Naive thymus-derived CD4-positive, alpha-beta T cell (primary cell): ENCODE measurements at regions of chr11 and their contacts with region 1.

Region 1: GRCh38 chr11:88337181-88337986 is at the start of gene CTSC:
- DNase-seq: peak; percentile 79 to 93 (median 86)
- ATAC-seq: peak; percentile 94
- H3K4me3 ChIP-seq: peak within 1 kb of the TSS; percentile 97
- H3K4me3 Mint-ChIP-seq: peak within 1 kb of the TSS; percentile 88 to 100 (median 99)
- H3K27ac ChIP-seq: peak within 1 kb of the TSS; percentile 70
- H3K27ac Mint-ChIP-seq: peak within 1 kb of the TSS; percentile 88 to 99 (median 96)
- H3K4me1 ChIP-seq: peaks cover 0 to 36% of the 10 kb centered on the region in 2 donors
- H3K4me1 Mint-ChIP-seq: peaks cover 30 to 76% (median 63%) of the 10 kb centered on the region in 7 donors
- H3K27me3 ChIP-seq: no peaks in the 10 kb centered on the region
- H3K27me3 Mint-ChIP-seq: no peaks in the 10 kb centered on the region
- total RNA-seq, gene CTSC: 26.9 to 174 (median 45.2) TPM

Region 2: GRCh38 chr11:87037450-87038234 is 1299.7 kb before region 1 on chr11 and contains the start of gene TMEM135:
- CTCF ChIA-PET with region 1: no interaction called
- POLR2A ChIA-PET with region 1: no interaction called
- intact Hi-C with region 1: loop called in 1 of 2 experiments (anchors 5 kb)
- DNase-seq: peak; percentile 82 to 96 (median 90)
- ATAC-seq: peak; percentile 99
- H3K4me3 ChIP-seq: peak within 1 kb of the TSS; percentile 97
- H3K4me3 Mint-ChIP-seq: peak within 1 kb of the TSS; percentile 92 to 99 (median 97)
- H3K27ac ChIP-seq: peak within 1 kb of the TSS; percentile 69
- H3K27ac Mint-ChIP-seq: peak within 1 kb of the TSS; percentile 77 to 96 (median 93)
- H3K4me1 ChIP-seq: peaks cover 11 to 15% of the 10 kb centered on the region in 2 donors
- H3K4me1 Mint-ChIP-seq: peaks cover 37 to 68% (median 58%) of the 10 kb centered on the region in 7 donors
- H3K27me3 ChIP-seq: no peaks in the 10 kb centered on the region
- H3K27me3 Mint-ChIP-seq: peaks cover 0 to 19% (median 0%) of the 10 kb centered on the region in 5 donors
- total RNA-seq, gene TMEM135: 8.3 to 26.8 (median 12.8) TPM

Region 3: GRCh38 chr11:88301488-88302140 is 35.8 kb before region 1 on chr11:
- CTCF ChIA-PET with region 1: no interaction called
- POLR2A ChIA-PET with region 1: no interaction called
- intact Hi-C with region 1: loop called in 1 of 2 experiments (anchors 2 kb)
- DNase-seq: no peak
- ATAC-seq: peak; percentile 72
- H3K4me3 ChIP-seq: no peak overlapping the region
- H3K4me3 Mint-ChIP-seq: peak overlapping the region in 1 of 10 donors; percentile 12
- H3K27ac ChIP-seq: no peak overlapping the region
- H3K27ac Mint-ChIP-seq: peak overlapping the region in 3 of 9 donors; percentile 35 to 73 (median 52)
- H3K4me1 ChIP-seq: peaks cover 0 to 13% of the 10 kb centered on the region in 2 donors
- H3K4me1 Mint-ChIP-seq: peaks cover 3 to 56% (median 15%) of the 10 kb centered on the region in 7 donors
- H3K27me3 ChIP-seq: no peaks in the 10 kb centered on the region
- H3K27me3 Mint-ChIP-seq: no peaks in the 10 kb centered on the region

Region 4: DNA sequence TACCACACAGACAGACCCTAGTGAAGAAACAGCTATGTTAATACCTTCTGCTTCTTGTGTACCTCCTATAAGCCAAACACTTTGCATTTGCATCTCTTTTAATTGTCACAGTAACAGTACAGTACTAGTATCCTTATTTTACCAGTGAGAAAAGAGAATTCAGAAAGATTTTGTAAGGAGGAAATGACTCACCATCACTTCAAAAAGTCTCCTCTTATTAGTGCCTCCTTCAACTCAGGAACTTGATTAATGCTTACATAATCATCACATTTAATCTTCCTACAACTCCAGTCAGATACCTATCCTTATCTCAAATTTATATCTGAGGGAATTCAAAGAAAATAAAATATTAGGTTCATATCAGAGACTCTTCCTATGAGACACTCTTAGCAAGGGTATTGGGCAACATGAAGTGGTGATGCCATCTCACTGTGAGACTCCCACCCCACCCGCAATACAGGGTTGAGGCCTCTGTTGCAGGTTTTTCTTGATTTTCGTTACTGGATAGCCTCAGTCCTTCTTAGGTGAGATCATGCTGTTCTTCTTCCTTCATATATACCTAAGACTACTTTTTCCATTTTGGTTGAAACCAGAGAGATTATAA is 26.3 kb after region 1 on chr11:
- CTCF ChIA-PET with region 1: no interaction called
- POLR2A ChIA-PET with region 1: interaction called, 4 read pairs
- intact Hi-C with region 1: loop called in 1 of 2 experiments (anchors 1 kb)
- DNase-seq: no peak
- ATAC-seq: peak; percentile 74
- H3K4me3 ChIP-seq: no peak overlapping the region
- H3K4me3 Mint-ChIP-seq: no peak overlapping the region
- H3K27ac ChIP-seq: no peak overlapping the region
- H3K27ac Mint-ChIP-seq: peak overlapping the region in 2 of 9 donors; percentile 19 to 26
- H3K4me1 ChIP-seq: peaks cover 11 to 26% of the 10 kb centered on the region in 2 donors
- H3K4me1 Mint-ChIP-seq: peaks cover 21 to 57% (median 49%) of the 10 kb centered on the region in 7 donors
- H3K27me3 ChIP-seq: no peaks in the 10 kb centered on the region
- H3K27me3 Mint-ChIP-seq: no peaks in the 10 kb centered on the region

Region 5: GRCh38 chr11:88390254-88390653 is 52.9 kb after region 1 on chr11:
- CTCF ChIA-PET with region 1: no interaction called
- POLR2A ChIA-PET with region 1: no interaction called
- intact Hi-C with region 1: no loop called
- DNase-seq: no peak
- ATAC-seq: no peak
- H3K4me3 ChIP-seq: no peak overlapping the region
- H3K4me3 Mint-ChIP-seq: no peak overlapping the region
- H3K27ac ChIP-seq: no peak overlapping the region
- H3K27ac Mint-ChIP-seq: no peak overlapping the region
- H3K4me1 ChIP-seq: no peaks in the 10 kb centered on the region
- H3K4me1 Mint-ChIP-seq: peaks cover 0 to 2% (median 0%) of the 10 kb centered on the region in 7 donors
- H3K27me3 ChIP-seq: no peaks in the 10 kb centered on the region
- H3K27me3 Mint-ChIP-seq: no peaks in the 10 kb centered on the region

Region 6: DNA sequence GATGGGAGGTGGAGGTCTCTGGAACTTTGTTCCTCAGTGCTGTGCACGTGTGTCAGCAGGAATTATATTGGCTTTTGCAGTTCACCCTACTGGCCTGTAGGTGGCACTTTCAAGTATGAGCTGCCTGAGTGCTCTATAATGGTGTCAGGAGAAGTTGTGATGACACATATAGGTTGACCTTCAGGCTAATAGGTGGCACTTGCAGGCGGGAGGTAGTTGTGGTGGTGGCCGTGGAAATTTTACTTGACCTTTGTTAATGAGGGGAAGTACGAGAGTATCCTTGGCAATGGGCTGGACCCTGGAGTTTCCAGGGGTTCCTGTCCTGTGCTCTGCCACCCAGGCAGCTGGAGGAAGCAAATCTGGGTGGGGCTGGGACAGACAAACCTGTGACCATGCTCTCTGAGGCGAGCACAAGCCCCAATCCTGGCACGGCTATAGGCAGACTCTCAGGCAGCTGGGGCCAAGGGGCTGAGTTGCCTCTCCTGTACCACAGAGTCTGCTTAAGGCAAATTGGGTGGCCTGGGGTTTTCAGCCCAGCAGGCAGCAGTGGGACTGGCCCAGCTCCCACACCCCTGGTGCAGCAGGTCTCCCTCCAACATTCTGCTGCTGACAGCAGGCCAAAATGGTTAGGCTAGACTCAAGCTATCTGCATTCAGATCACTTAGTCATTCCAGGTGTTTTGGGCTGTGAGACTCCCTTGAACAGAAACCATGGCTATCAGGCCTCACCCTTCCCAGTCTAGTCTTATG is 147.7 kb after region 1 on chr11:
- CTCF ChIA-PET with region 1: no interaction called
- POLR2A ChIA-PET with region 1: no interaction called
- intact Hi-C with region 1: loop called in 1 of 2 experiments (anchors 5 kb)
- DNase-seq: peak in 3 of 9 donors; percentile 14 to 24 (median 21)
- ATAC-seq: peak; percentile 89
- H3K4me3 ChIP-seq: no peak overlapping the region
- H3K4me3 Mint-ChIP-seq: no peak overlapping the region
- H3K27ac ChIP-seq: no peak overlapping the region
- H3K27ac Mint-ChIP-seq: no peak overlapping the region
- H3K4me1 ChIP-seq: no peaks in the 10 kb centered on the region
- H3K4me1 Mint-ChIP-seq: peaks cover 0 to 4% (median 0%) of the 10 kb centered on the region in 7 donors
- H3K27me3 ChIP-seq: no peaks in the 10 kb centered on the region
- H3K27me3 Mint-ChIP-seq: peaks cover 0 to 9% (median 0%) of the 10 kb centered on the region in 5 donors

Region 7: GRCh38 chr11:88886796-88887195 is 549.4 kb after region 1 on chr11:
- CTCF ChIA-PET with region 1: no interaction called
- POLR2A ChIA-PET with region 1: no interaction called
- intact Hi-C with region 1: loop called in 1 of 2 experiments (anchors 10 kb)
- DNase-seq: peak in 4 of 9 donors; percentile 11 to 34 (median 19)
- ATAC-seq: no peak
- H3K4me3 ChIP-seq: no peak overlapping the region
- H3K4me3 Mint-ChIP-seq: no peak overlapping the region
- H3K27ac ChIP-seq: no peak overlapping the region
- H3K27ac Mint-ChIP-seq: peak overlapping the region in 3 of 9 donors; percentile 9 to 19 (median 14)
- H3K4me1 ChIP-seq: no peaks in the 10 kb centered on the region
- H3K4me1 Mint-ChIP-seq: peaks cover 0 to 1% (median 0%) of the 10 kb centered on the region in 7 donors
- H3K27me3 ChIP-seq: no peaks in the 10 kb centered on the region
- H3K27me3 Mint-ChIP-seq: no peaks in the 10 kb centered on the region